Ascending aorta (tissue), 2 donors: ENCODE measurements at regions of chr1 and their contacts with region 1.

Region 1: DNA sequence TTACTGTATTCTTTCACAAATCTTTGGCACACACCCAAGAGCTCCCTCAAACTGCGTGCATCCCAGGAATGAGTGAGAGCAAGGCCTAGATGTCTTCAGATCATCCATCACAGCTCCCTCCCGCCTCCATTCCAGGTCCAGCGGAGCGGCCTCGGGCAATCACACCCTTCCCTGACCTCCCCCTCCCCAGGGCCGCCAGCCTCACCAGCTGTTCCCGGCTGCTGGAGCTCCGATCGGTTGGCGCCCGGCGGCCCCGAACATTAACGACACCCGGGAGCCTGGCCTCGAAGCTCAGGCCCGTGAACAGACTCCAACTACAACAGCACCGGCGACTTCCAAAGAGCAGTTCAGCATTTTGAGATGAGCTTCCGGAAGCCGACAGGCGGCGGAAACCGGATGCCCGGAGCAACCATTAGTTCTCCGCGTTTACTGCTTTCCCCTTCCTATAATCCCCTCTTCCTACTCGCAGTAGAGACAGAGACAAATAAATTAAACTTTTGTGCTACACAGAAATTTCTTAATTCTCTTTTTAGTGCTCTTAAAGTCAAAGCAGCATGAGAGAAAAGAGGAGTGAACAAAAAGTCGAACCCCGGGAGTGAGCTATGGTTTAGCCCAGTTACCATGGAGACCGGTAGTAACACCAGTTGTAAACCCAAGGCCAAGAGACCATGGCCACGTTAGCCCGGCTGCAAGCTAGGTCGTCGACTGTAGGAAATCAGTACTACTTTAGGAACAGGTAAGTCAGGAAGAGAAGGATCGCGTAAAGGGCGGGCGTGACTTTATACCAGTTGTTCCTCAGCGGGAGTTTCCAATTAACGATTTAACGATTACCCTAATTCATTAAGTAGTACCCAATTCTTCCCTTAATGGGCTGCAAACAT is at the starts of genes GPATCH2 and SPATA17:
- DNase-seq: peak in 1 of 2 donors; percentile 85
- H3K4me3 ChIP-seq: peak within 1 kb of the TSS; percentile 84 to 85
- H3K27ac ChIP-seq: peak within 1 kb of the TSS; percentile 83 to 87
- H3K4me1 ChIP-seq: peaks cover 2 to 10% of the 10 kb centered on the region in 2 donors
- H3K27me3 ChIP-seq: no peaks in the 10 kb centered on the region
- CTCF ChIP-seq: peak in 2 of 3 experiments; percentile 24 to 35
- total RNA-seq, gene GPATCH2: 3.8 TPM
- total RNA-seq, gene SPATA17: not detected

Region 2: GRCh38 chr1:215992620-215993019 is 1638.3 kb before region 1 on chr1:
- intact Hi-C with region 1: no loop called
- DNase-seq: no peak
- H3K4me3 ChIP-seq: no peak overlapping the region
- H3K27ac ChIP-seq: no peak overlapping the region
- H3K4me1 ChIP-seq: no peaks in the 10 kb centered on the region
- H3K27me3 ChIP-seq: no peaks in the 10 kb centered on the region
- CTCF ChIP-seq: peak in 1 of 3 experiments; percentile 18

Region 3: DNA sequence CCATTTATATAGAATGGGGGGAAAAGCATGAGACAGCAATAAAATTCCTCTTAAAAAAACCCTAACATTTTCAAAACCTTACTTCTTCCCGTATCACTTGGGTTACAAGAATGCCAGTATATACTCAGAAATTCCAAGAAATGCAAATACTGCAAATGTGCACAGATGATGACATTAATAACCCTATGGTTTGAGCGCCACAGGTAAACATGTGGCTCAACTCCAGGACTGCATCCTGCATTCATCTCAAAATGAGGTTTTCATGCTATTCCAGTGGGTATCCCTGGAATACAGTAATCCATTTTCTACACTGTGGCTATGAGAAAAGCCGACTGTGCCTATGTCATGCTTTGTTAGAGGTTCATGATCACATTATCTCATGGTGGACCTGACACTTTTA is 114.7 kb before region 1 on chr1:
- intact Hi-C with region 1: no loop called
- DNase-seq: no peak
- H3K4me3 ChIP-seq: no peak overlapping the region
- H3K27ac ChIP-seq: no peak overlapping the region
- H3K4me1 ChIP-seq: no peaks in the 10 kb centered on the region
- H3K27me3 ChIP-seq: no peaks in the 10 kb centered on the region
- CTCF ChIP-seq: no peak

Region 4: DNA sequence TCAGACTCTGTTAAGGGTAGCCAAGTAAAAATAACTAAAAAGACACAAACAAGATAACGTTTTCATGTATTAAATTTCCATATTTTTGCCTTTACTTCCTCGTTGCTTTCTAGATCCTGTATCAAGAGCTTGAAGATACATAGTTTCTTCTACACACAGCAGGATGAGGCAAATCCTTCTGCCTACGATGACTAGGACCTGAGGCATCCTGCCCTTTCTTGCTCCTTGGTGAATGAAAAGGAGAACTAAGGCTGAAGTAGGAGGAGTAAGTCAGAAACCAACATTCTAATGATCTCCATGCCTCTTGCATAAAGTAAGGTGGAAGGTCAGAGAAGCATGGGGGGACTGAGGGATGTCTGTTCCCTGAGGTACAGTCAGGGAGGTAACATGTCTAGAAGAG is 102.7 kb before region 1 on chr1:
- intact Hi-C with region 1: loop called (anchors 5 kb)
- DNase-seq: no peak
- H3K4me3 ChIP-seq: no peak overlapping the region
- H3K27ac ChIP-seq: no peak overlapping the region
- H3K4me1 ChIP-seq: peaks cover 0 to 12% of the 10 kb centered on the region in 2 donors
- H3K27me3 ChIP-seq: no peaks in the 10 kb centered on the region
- CTCF ChIP-seq: no peak